CD8-positive, alpha-beta memory T cell (primary cell): ENCODE measurements at regions of chr1 and their contacts with region 1.

Region 1: GRCh38 chr1:167687919-167688519 is 33.8 kb upstream of the MPZL1 start:
- DNase-seq: peak; percentile 60 to 79 (median 69)
- H3K4me3 ChIP-seq: no peak overlapping the region
- H3K4me3 Mint-ChIP-seq: peak overlapping the region in 1 of 7 donors; percentile 1
- H3K27ac ChIP-seq: no peak overlapping the region
- H3K27ac Mint-ChIP-seq: peak overlapping the region; percentile 9 to 91 (median 58)
- H3K4me1 ChIP-seq: peaks cover 4% of the 10 kb centered on the region
- H3K4me1 Mint-ChIP-seq: peaks cover 19 to 34% (median 22%) of the 10 kb centered on the region in 3 donors
- H3K27me3 ChIP-seq: no peaks in the 10 kb centered on the region
- H3K27me3 Mint-ChIP-seq: no peaks in the 10 kb centered on the region

Region 2: DNA sequence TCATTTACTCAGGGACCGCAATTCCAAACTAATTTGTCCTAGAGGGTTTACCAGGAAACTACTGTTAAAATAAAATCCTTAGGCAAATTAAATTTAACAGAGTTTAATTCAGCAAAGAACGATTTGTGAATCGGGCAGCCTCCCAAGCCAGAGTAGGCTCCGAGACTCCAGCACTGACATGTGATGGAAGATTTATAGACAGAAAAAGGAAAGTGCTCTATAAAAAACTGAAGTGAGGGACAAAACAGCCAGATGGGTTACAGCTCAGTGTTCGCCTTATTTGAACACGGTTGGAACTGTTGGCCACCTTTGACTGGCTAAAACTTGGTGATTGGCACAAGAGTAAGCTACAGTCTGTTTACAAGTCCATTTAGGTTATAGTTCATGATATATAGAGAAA is 93.2 kb before region 1 on chr1:
- CTCF ChIA-PET with region 1: interaction called, 115 read pairs
- POLR2A ChIA-PET with region 1: interaction called, 9 read pairs
- DNase-seq: no peak
- H3K4me3 ChIP-seq: no peak overlapping the region
- H3K4me3 Mint-ChIP-seq: no peak overlapping the region
- H3K27ac ChIP-seq: no peak overlapping the region
- H3K27ac Mint-ChIP-seq: no peak overlapping the region
- H3K4me1 ChIP-seq: no peaks in the 10 kb centered on the region
- H3K4me1 Mint-ChIP-seq: peaks cover 2 to 6% (median 3%) of the 10 kb centered on the region in 3 donors
- H3K27me3 ChIP-seq: no peaks in the 10 kb centered on the region
- H3K27me3 Mint-ChIP-seq: no peaks in the 10 kb centered on the region

Region 3: GRCh38 chr1:167627865-167628641 is 60.0 kb before region 1 on chr1:
- CTCF ChIA-PET with region 1: interaction called, 63 read pairs
- POLR2A ChIA-PET with region 1: no interaction called
- DNase-seq: peak; percentile 60 to 85 (median 77)
- H3K4me3 ChIP-seq: peak overlapping the region; percentile 60
- H3K4me3 Mint-ChIP-seq: peak overlapping the region; percentile 94 to 98 (median 96)
- H3K27ac ChIP-seq: peak overlapping the region; percentile 86
- H3K27ac Mint-ChIP-seq: peak overlapping the region; percentile 94 to 100 (median 98)
- H3K4me1 ChIP-seq: peaks cover 53% of the 10 kb centered on the region
- H3K4me1 Mint-ChIP-seq: peaks cover 61 to 68% (median 65%) of the 10 kb centered on the region in 3 donors
- H3K27me3 ChIP-seq: no peaks in the 10 kb centered on the region
- H3K27me3 Mint-ChIP-seq: peaks cover 0 to 5% of the 10 kb centered on the region in 2 donors

Region 4: DNA sequence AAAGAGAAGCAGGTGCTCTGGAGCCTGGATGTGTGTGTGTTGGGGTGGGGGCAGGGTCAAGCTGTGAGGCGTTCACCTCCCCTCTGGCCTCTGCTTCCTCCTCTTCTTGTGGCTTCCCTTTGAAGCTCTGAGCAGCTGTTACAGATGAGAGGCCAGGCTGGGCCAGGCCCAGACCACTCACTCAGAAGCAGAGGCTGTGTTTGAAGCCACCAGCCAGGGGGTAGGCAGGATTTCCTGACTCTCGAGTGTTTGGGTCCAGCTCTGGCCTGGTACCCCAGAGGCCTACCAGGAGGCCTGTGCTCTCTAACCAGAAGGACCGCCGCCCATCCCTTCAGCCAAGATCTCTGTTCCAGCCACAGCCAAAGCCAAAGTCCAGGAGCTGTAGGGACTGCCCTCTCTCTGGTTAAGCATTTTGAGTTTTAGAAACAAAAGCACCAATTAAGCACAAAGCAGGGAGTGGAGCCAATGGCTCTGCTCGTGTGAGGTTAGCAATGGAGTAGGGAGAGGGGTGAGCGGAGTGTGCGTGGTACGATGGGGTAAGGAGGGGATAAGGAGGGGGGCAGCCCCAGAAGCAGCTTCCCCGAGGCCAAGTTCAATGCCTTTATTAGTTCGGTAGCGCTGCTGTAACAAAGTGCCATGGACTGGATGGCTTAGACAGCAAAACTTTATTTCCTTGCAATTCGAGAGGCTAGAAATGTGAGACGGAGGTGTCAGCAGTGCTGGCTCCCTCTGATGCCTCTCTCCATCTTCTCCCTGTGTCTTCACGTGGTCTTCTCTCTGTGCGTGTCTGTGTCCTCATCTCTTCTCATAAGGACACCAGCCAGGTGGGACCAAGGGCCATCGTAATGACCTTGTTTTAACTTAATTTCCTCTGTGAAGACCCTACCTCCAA is 37.5 kb before region 1 on chr1:
- CTCF ChIA-PET with region 1: interaction called, 22 read pairs
- POLR2A ChIA-PET with region 1: interaction called, 3 read pairs
- DNase-seq: no peak
- H3K4me3 ChIP-seq: peak overlapping the region; percentile 2
- H3K4me3 Mint-ChIP-seq: peak overlapping the region in 6 of 7 donors; percentile 48 to 86 (median 77)
- H3K27ac ChIP-seq: no peak overlapping the region
- H3K27ac Mint-ChIP-seq: peak overlapping the region; percentile 83 to 98 (median 95)
- H3K4me1 ChIP-seq: peaks cover 78% of the 10 kb centered on the region
- H3K4me1 Mint-ChIP-seq: peaks cover 89 to 93% (median 93%) of the 10 kb centered on the region in 3 donors
- H3K27me3 ChIP-seq: no peaks in the 10 kb centered on the region
- H3K27me3 Mint-ChIP-seq: peaks cover 0 to 3% of the 10 kb centered on the region in 2 donors

Region 5: DNA sequence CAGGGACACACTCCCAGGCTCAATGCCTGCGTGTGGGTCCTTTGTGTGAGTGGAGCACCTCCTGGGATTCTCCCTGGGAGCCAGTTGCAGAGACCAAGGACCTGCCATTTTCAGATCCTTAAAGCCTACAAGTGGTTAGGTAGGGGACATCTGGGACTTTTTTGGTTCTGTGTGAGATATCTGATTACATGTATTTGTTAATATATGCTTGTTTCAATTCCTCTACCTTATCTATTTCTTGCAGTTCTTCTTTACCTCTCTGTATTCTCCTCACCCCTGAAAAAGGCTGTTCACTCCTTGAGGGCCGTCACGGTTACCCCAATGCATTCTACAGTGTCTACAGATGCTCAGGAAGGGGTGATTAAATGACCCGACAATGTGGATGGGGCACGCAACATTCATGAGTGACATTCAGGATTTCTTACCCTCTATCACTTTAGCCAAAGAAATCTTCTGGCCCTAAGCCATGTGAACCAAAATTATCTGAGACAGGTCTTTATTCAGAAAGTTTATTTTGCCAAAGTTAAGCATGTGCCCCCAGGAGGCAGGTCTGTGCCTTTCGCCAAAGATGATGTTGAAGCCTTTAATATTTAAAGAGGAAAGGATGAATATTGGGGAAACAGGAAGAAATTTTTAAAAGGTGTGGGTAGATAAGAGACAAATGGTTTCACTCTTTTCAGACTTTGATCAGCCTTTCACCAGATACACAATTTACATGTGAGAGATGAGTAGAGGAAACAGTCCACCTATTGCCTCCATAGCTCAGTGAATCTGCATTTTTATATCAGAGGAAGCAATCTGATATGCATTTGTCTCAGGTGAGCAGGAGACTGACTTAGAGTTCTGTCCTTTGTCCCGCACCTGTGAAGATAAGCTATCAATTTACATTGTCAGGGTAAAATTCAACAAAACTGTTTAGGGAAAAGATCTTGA is 10.8 kb before region 1 on chr1:
- CTCF ChIA-PET with region 1: interaction called, 10 read pairs
- POLR2A ChIA-PET with region 1: no interaction called
- DNase-seq: no peak
- H3K4me3 ChIP-seq: no peak overlapping the region
- H3K4me3 Mint-ChIP-seq: peak overlapping the region in 1 of 7 donors; percentile 51
- H3K27ac ChIP-seq: no peak overlapping the region
- H3K27ac Mint-ChIP-seq: peak overlapping the region in 5 of 8 donors; percentile 40 to 66 (median 45)
- H3K4me1 ChIP-seq: peaks cover 56% of the 10 kb centered on the region
- H3K4me1 Mint-ChIP-seq: peaks cover 30 to 54% (median 30%) of the 10 kb centered on the region in 3 donors
- H3K27me3 ChIP-seq: no peaks in the 10 kb centered on the region
- H3K27me3 Mint-ChIP-seq: no peaks in the 10 kb centered on the region

Region 6: GRCh38 chr1:167705250-167705649 is 17.2 kb after region 1 on chr1:
- CTCF ChIA-PET with region 1: interaction called, 14 read pairs
- POLR2A ChIA-PET with region 1: no interaction called
- DNase-seq: no peak
- H3K4me3 ChIP-seq: no peak overlapping the region
- H3K4me3 Mint-ChIP-seq: no peak overlapping the region
- H3K27ac ChIP-seq: no peak overlapping the region
- H3K27ac Mint-ChIP-seq: peak overlapping the region in 3 of 8 donors; percentile 8 to 56 (median 17)
- H3K4me1 ChIP-seq: no peaks in the 10 kb centered on the region
- H3K4me1 Mint-ChIP-seq: peaks cover 20 to 37% (median 28%) of the 10 kb centered on the region in 3 donors
- H3K27me3 ChIP-seq: no peaks in the 10 kb centered on the region
- H3K27me3 Mint-ChIP-seq: no peaks in the 10 kb centered on the region